Activated CD4-positive, alpha-beta T cell treated with anti-CD3 and anti-CD28 coated beads for 36 hours (primary cell): ENCODE measurements at regions of chr2 and their contacts with region 1.

Region 1: DNA sequence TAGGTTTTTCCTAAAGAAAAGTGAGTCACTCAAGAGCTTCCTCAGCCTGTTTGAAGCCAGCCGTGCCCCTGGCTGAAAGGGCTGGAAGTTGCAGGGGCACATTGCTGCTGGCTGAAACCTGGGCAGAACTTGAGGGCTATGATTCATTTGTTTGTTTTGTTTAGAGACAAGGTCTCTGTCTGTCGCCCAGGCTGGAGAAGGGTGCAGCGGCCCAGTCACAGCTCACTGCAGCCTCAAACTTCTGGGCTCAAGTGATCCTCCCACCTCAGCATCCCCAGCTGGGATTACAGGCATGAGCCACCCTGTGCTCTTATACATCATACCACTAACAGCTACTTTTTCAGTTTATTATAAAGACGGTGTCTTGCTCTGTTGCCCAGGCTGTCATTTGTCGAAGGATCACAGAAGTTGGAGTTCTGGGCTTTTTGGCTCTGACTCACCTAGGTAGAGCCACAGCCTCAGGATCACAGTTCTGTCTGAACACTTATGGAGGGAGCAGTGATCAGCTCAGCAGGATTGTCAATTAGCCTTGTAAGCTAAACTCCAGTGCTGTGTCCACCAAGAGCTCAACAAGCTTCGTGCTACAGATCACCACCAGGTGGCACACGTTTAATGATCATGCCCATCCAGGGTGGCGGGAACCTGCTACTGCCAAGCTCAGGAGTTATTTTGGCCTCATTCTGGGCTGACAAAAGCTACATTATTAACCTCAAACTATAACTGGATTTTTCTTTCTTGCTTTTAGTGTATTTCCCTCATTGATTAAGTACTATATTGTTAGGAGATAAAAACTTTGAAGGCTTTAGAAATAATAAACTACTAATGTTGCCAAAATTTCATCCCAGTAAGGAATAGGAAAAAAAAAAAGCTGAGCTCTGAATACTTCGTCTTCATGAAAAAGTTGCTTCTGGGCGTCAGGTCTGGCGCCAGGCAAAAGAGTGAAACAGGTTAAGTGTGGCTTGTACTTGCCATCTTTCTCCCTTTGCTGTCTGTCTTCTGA is 57.9 kb downstream of the ARHGEF33 start:
- DNase-seq: peak; percentile 84
- ATAC-seq: peak; percentile 84
- H3K4me3 Mint-ChIP-seq: no peak overlapping the region
- H3K27ac Mint-ChIP-seq: no peak overlapping the region
- H3K4me1 Mint-ChIP-seq: no peaks in the 10 kb centered on the region
- H3K27me3 Mint-ChIP-seq: no peaks in the 10 kb centered on the region

Region 2: DNA sequence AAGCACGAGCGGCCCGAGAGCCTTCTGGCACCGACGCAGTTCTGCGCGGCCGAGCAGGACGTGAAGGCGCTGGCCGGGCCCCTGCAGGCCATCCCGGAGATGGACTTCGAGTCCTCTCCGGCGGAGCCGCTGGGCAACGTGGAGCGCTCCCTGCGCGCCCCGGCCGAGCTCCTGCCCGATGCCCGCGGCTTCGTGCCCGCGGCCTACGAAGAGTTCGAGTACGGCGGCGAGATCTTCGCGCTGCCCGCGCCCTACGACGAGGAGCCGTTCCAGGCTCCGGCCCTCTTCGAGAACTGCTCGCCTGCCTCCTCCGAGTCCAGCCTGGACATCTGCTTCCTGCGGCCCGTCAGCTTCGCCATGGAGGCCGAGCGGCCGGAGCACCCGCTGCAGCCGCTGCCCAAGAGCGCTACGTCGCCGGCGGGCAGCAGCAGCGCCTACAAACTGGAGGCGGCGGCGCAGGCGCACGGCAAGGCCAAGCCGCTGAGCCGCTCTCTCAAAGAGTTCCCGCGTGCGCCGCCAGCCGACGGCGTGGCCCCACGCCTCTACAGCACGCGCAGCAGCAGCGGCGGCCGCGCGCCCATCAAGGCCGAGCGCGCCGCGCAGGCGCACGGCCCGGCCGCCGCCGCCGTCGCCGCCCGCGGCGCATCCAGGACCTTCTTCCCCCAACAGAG is 12.5 kb after region 1 on chr2:
- CTCF ChIA-PET with region 1: interaction called, 27 read pairs
- POLR2A ChIA-PET with region 1: no interaction called
- intact Hi-C with region 1: no loop called
- DNase-seq: peak; percentile 87
- ATAC-seq: peak; percentile 100
- H3K4me3 Mint-ChIP-seq: peak overlapping the region; percentile 36
- H3K27ac Mint-ChIP-seq: no peak overlapping the region
- H3K4me1 Mint-ChIP-seq: peaks cover 2% of the 10 kb centered on the region
- H3K27me3 Mint-ChIP-seq: peaks cover 18% of the 10 kb centered on the region

Region 3: DNA sequence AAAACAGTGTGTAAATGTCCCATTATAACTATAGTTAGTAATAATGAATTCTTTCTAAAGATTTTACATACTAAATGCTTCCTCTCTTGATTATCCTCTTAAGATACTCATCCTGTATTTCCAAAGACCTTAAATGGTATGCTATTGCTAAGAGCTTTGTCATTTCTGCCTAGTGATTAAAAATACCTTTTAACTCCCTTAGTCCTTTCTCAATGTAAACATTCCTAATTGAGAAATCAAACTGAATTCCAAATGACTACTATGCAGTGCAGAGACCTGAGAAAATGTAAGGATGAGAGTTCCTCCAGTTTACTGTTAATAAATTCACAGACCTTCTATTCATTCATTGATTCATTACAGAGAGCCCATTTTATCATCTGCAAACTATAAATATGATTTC is 86.4 kb after region 1 on chr2:
- CTCF ChIA-PET with region 1: interaction called, 12 read pairs
- POLR2A ChIA-PET with region 1: no interaction called
- intact Hi-C with region 1: loop called in 1 of 2 experiments (anchors 5 kb)
- DNase-seq: no peak
- ATAC-seq: no peak
- H3K4me3 Mint-ChIP-seq: no peak overlapping the region
- H3K27ac Mint-ChIP-seq: peak overlapping the region; percentile 12
- H3K4me1 Mint-ChIP-seq: peaks cover 4% of the 10 kb centered on the region
- H3K27me3 Mint-ChIP-seq: no peaks in the 10 kb centered on the region

Region 4: DNA sequence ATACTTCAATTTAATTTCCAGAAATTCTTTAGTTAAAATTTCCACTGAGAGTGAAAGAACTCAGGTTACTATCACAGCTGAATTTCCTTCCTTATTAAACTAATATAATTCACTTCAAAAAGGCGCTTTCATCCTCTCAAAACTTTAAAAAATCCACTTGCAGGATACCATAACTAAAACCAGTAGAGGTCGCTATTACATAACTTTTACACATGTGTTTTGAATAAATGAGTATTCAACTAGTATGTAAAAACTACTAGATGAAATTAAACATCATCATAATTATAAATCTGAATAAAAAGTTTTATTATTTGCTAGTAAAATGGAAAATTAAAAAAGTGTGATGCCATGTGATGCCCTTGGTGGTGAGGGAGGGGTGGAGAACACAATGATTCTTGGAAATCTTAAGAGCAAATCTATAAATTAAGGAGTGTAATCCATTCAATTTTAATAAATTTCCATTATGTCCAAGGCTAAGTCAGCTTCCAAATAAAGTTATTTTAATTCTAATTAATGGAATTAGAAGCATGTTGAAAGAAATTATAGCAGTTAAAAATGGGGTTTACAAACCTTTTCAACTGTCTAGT is 111.9 kb after region 1 on chr2:
- CTCF ChIA-PET with region 1: interaction called, 17 read pairs
- POLR2A ChIA-PET with region 1: no interaction called
- intact Hi-C with region 1: loop called (anchors 2 to 5 kb)
- DNase-seq: no peak
- ATAC-seq: peak; percentile 36
- H3K4me3 Mint-ChIP-seq: no peak overlapping the region
- H3K27ac Mint-ChIP-seq: no peak overlapping the region
- H3K4me1 Mint-ChIP-seq: no peaks in the 10 kb centered on the region
- H3K27me3 Mint-ChIP-seq: no peaks in the 10 kb centered on the region